Heart right ventricle (tissue), 16 donors: ENCODE measurements at regions of chr1 and their contacts with region 1.

Region 1: DNA sequence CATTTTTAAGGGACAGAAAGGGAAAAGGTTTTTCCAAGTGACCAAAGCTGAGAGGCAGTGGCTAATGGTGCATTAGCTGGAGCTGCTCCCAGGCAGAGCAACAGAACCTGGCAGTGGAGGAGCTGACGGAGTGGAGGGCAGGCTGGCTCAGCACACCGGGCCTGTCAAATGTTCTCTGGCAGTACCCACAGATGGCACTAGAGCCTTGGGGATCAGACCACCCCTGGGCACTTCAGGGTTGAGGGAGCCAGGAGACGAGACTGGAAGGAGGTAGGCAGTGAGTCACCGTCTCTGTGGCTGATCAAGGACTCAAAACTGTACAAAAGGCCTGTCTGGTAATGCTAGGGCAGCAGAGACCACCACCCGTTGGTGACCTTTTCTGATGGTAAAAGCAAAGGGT is 121.7 kb upstream of the KIAA0040 start:
- DNase-seq: no peak
- ATAC-seq: peak in 4 of 8 donors; percentile 15 to 70 (median 52)
- H3K4me3 ChIP-seq: no peak overlapping the region
- H3K27ac ChIP-seq: no peak overlapping the region
- H3K4me1 ChIP-seq: peaks cover 3 to 37% (median 22%) of the 10 kb centered on the region in 9 donors
- H3K27me3 ChIP-seq: peaks cover 0 to 7% (median 0%) of the 10 kb centered on the region in 7 donors
- CTCF ChIP-seq: peak in 1 of 9 donors; percentile 11

Region 2: GRCh38 chr1:175169305-175170018 is 144.8 kb before region 1 on chr1:
- intact Hi-C with region 1: loop called in 1 of 10 experiments (anchors 5 kb)
- DNase-seq: no peak
- ATAC-seq: peak in 1 of 8 donors; percentile 26
- H3K4me3 ChIP-seq: no peak overlapping the region
- H3K27ac ChIP-seq: peak overlapping the region in 1 of 10 donors; percentile 12
- H3K4me1 ChIP-seq: peaks cover 3 to 35% (median 16%) of the 10 kb centered on the region in 9 donors
- H3K27me3 ChIP-seq: no peaks in the 10 kb centered on the region
- CTCF ChIP-seq: no peak

Region 3: GRCh38 chr1:175364424-175365235 is 50.3 kb after region 1 on chr1:
- intact Hi-C with region 1: no loop called
- DNase-seq: no peak
- ATAC-seq: no peak
- H3K4me3 ChIP-seq: no peak overlapping the region
- H3K27ac ChIP-seq: no peak overlapping the region
- H3K4me1 ChIP-seq: no peaks in the 10 kb centered on the region
- H3K27me3 ChIP-seq: peaks cover 0 to 26% (median 14%) of the 10 kb centered on the region in 7 donors
- CTCF ChIP-seq: no peak